ENCODE measurements at regions of chr12 and their contacts with region 1.

Region 1: GRCh38 chr12:79555028-79555930 is 135.5 kb downstream of the PAWR start:
- DNase-seq: peak; percentile 77
- ATAC-seq: peak; percentile 79
- H3K4me3 ChIP-seq: no peak overlapping the region
- H3K27ac ChIP-seq: no peak overlapping the region
- H3K4me1 ChIP-seq: peaks cover 9% of the 10 kb centered on the region
- H3K27me3 ChIP-seq: no peaks in the 10 kb centered on the region
- CTCF ChIP-seq: peak; percentile 91

Region 2: DNA sequence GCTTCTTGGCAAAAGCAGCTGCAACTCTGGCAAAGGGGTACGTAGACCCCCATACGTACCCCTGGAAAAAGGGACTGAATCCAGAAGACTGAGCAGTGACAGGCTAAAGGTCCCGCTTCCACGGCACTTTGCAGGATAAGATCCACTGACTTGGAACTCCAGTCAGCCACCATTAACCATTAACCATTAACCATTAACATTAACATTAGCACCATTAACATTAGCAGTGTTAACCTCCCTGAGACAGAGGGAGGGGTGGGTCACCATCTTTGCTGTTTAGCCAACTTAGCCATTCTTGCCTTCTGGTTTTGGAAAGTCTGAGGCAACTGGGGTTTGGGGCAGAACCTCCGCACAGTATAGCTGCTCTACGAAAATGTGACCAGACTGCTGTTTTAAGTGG is 52.0 kb before region 1 on chr12:
- CTCF ChIA-PET with region 1: no interaction called
- POLR2A ChIA-PET with region 1: interaction called, 14 read pairs
- intact Hi-C with region 1: no loop called
- DNase-seq: no peak
- ATAC-seq: no peak
- H3K4me3 ChIP-seq: no peak overlapping the region
- H3K27ac ChIP-seq: no peak overlapping the region
- H3K4me1 ChIP-seq: no peaks in the 10 kb centered on the region
- H3K27me3 ChIP-seq: no peaks in the 10 kb centered on the region
- CTCF ChIP-seq: no peak

Region 3: GRCh38 chr12:79737875-79738718 is 182.8 kb after region 1 on chr12:
- CTCF ChIA-PET with region 1: no interaction called
- POLR2A ChIA-PET with region 1: no interaction called
- intact Hi-C with region 1: loop called (anchors 1 kb)
- DNase-seq: peak; percentile 89
- ATAC-seq: peak; percentile 72
- H3K4me3 ChIP-seq: no peak overlapping the region
- H3K27ac ChIP-seq: no peak overlapping the region
- H3K4me1 ChIP-seq: peaks cover 4% of the 10 kb centered on the region; the same call in 1 of the 2 replicates
- H3K27me3 ChIP-seq: no peaks in the 10 kb centered on the region
- CTCF ChIP-seq: peak; percentile 87

Region 4: GRCh38 chr12:79886917-79887519 is 331.7 kb after region 1 on chr12:
- CTCF ChIA-PET with region 1: no interaction called
- POLR2A ChIA-PET with region 1: no interaction called
- intact Hi-C with region 1: loop called (anchors 10 kb)
- DNase-seq: peak; percentile 84
- ATAC-seq: peak; percentile 78
- H3K4me3 ChIP-seq: no peak overlapping the region
- H3K27ac ChIP-seq: no peak overlapping the region
- H3K4me1 ChIP-seq: peaks cover 12% of the 10 kb centered on the region
- H3K27me3 ChIP-seq: no peaks in the 10 kb centered on the region
- CTCF ChIP-seq: peak; percentile 87

Measured in PC-3 (cell line).